Dendritic cell treated with granulocyte-macrophage colony-stimulating factor and Interleukin-4, amounts not matched to agents 40 ng/mL and 50 ng/mL, for 4 days (primary cell): ENCODE measurements at regions of chr1 and their contacts with region 1.

Region 1: DNA sequence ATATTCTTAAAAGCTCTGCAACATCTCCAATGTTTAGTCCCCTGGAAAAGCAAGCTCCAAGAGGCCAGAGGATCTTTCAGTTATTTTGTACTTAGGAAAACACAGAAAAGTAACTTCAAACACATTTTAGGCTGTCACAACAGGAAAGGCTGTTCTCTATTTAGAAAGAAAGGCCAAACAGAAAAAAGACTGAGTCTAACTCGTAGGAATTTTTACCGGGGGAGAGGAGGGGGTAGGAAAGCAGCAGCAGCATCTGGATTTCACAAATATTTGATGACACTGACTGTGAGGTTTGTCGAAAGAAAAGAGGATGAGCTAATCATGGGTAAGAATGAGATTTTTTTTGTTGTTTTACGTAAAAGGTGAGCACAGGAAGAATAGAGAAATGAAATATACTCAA is 107.1 kb downstream of the EIF4G3 start:
- H3K4me3 Mint-ChIP-seq: no peak overlapping the region
- H3K27ac Mint-ChIP-seq: no peak overlapping the region
- H3K4me1 Mint-ChIP-seq: peaks cover 9% of the 10 kb centered on the region
- H3K27me3 Mint-ChIP-seq: no peaks in the 10 kb centered on the region

Region 2: DNA sequence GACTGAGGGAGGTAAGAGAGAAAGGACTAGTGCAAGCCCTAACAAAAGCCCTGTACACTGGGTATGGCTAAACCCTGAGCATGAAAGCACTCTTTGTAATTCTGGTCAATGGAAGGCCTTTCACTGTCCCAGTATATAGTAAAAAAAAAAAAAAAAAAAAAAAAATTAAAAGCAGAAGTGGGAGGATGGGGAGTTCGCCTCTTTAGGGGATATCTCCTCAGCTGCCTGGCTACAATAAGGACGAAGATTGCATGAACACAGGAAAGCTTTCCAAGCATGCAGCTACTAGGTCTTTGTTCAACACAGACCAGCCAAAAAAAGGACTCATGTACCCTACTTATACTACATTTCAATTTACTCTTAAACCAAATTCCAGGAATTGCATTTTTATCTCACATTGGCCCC is 48.0 kb after region 1 on chr1:
- intact Hi-C with region 1: loop called (anchors 10 kb)
- H3K4me3 Mint-ChIP-seq: no peak overlapping the region
- H3K27ac Mint-ChIP-seq: no peak overlapping the region
- H3K4me1 Mint-ChIP-seq: peaks cover 16% of the 10 kb centered on the region
- H3K27me3 Mint-ChIP-seq: no peaks in the 10 kb centered on the region

Region 3: DNA sequence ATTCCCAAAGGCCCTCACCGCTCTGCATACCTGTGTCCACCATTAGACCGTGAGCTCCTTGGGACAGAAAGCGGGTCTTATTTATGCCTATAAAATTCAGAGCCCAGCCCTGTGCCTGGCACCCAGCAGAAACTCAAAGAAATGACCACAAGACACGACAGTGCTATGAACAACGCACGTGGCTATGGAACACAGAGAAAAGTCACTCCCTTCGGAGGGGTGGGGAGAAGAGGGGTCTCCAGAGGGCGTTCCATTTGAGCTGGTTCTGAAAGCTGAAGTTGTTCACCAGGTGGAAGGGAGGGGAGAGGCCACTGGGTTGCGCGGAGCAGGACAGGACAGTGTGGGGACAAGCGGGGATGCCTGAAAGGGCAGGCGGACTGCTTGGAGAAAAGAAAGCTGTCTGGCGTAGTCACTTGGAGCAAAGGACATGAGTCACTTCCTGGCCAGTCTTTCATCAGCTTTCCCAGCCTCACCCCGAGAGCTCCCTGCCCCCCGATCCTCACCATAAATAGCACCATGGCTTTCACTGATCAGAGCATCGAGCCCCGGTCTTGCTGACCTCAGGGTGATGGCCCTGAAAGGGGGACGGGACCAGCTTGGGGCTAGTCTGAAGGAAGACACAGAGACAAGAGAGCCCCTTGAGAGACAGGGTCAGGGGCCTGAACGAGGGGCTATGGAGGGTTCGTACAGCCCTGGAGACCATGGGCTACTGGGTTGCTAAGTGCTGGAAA is 192.2 kb after region 1 on chr1:
- intact Hi-C with region 1: no loop called
- H3K4me3 Mint-ChIP-seq: peak overlapping the region; percentile 66
- H3K27ac Mint-ChIP-seq: peak overlapping the region; percentile 77
- H3K4me1 Mint-ChIP-seq: peaks cover 26% of the 10 kb centered on the region
- H3K27me3 Mint-ChIP-seq: peaks cover 69% of the 10 kb centered on the region